Naive thymus-derived CD4-positive, alpha-beta T cell (primary cell): ENCODE measurements at regions of chr21 and their contacts with region 1.

Region 1: GRCh38 chr21:34073032-34073869 is at the starts of genes MRPS6 and SLC5A3:
- DNase-seq: peak; percentile 58 to 82 (median 72)
- ATAC-seq: peak; percentile 89
- H3K4me3 ChIP-seq: peak within 1 kb of the TSS; percentile 72
- H3K4me3 Mint-ChIP-seq: peak within 1 kb of the TSS; percentile 88 to 98 (median 96)
- H3K27ac ChIP-seq: peak within 1 kb of the TSS; percentile 82
- H3K27ac Mint-ChIP-seq: peak within 1 kb of the TSS; percentile 89 to 95 (median 93)
- H3K4me1 ChIP-seq: peaks cover 31 to 34% of the 10 kb centered on the region in 2 donors
- H3K4me1 Mint-ChIP-seq: peaks cover 9 to 54% (median 46%) of the 10 kb centered on the region in 7 donors
- H3K27me3 ChIP-seq: no peaks in the 10 kb centered on the region
- H3K27me3 Mint-ChIP-seq: peaks cover 0 to 7% (median 0%) of the 10 kb centered on the region in 5 donors
- total RNA-seq, gene MRPS6: 25.5 to 92.7 (median 87.9) TPM
- total RNA-seq, gene SLC5A3: 8.8 to 45.5 (median 34.0) TPM

Region 2: DNA sequence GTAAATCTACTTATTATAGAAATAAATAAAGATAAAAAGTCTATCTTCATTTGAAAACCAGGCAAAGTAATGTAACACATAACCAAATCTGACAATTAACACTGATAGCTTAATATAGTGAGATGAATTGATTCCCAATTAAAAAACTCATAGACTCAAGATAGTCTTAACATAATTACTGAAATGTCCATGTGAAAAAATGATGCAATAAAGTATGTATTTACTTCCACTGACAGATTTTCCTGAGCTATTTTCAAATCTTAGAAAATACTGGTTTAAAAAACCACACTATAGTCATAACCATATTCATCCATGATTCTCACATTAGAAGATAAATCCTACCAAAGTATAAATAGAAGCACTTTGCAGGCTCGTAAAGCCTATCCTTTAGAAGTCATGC is 475.2 kb before region 1 on chr21:
- CTCF ChIA-PET with region 1: no interaction called
- POLR2A ChIA-PET with region 1: no interaction called
- intact Hi-C with region 1: no loop called
- DNase-seq: no peak
- ATAC-seq: no peak
- H3K4me3 ChIP-seq: no peak overlapping the region
- H3K4me3 Mint-ChIP-seq: no peak overlapping the region
- H3K27ac ChIP-seq: no peak overlapping the region
- H3K27ac Mint-ChIP-seq: no peak overlapping the region
- H3K4me1 ChIP-seq: no peaks in the 10 kb centered on the region
- H3K4me1 Mint-ChIP-seq: no peaks in the 10 kb centered on the region
- H3K27me3 ChIP-seq: no peaks in the 10 kb centered on the region
- H3K27me3 Mint-ChIP-seq: no peaks in the 10 kb centered on the region

Region 3: DNA sequence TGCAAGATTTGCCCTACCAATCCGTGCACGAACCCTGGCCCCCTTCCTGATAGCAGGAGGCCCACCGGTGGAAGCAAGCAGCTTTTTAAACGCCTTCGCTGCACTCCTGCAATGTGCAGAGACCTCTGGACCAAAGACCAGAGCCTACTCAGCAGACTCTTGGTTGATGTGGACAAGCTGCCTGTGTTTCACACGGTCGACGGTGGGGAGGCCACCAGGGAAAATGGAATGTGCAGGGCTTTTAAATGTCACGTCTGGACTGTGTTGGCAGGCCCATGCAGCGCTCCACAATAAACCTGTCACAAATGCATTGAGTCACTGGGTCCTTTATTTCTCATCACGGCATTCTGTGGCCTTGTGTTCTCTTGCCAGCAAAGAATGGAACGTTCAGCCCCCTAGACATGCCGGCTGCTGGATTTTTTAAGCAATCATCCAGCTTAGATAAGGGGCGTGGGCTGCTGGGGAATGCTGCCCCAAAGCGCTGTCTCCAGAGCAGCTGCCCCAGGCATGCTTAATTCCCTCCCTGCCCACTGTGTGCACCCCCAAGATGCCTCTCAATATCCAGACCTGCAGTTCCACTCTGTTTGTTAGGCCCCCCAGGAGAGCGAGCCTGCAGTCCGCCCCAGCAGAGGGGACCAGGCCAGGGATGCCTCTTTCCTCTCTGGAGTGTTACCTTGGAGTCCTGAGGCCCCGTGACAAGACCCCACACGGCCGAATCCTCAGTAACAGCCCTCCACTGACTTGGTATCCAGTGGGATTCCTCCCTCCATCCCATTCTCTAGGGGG is 229.0 kb before region 1 on chr21:
- CTCF ChIA-PET with region 1: no interaction called
- POLR2A ChIA-PET with region 1: no interaction called
- intact Hi-C with region 1: no loop called
- DNase-seq: no peak
- ATAC-seq: no peak
- H3K4me3 ChIP-seq: no peak overlapping the region
- H3K4me3 Mint-ChIP-seq: no peak overlapping the region
- H3K27ac ChIP-seq: no peak overlapping the region
- H3K27ac Mint-ChIP-seq: no peak overlapping the region
- H3K4me1 ChIP-seq: no peaks in the 10 kb centered on the region
- H3K4me1 Mint-ChIP-seq: no peaks in the 10 kb centered on the region
- H3K27me3 ChIP-seq: no peaks in the 10 kb centered on the region
- H3K27me3 Mint-ChIP-seq: peaks cover 0 to 10% (median 0%) of the 10 kb centered on the region in 5 donors

Region 4: DNA sequence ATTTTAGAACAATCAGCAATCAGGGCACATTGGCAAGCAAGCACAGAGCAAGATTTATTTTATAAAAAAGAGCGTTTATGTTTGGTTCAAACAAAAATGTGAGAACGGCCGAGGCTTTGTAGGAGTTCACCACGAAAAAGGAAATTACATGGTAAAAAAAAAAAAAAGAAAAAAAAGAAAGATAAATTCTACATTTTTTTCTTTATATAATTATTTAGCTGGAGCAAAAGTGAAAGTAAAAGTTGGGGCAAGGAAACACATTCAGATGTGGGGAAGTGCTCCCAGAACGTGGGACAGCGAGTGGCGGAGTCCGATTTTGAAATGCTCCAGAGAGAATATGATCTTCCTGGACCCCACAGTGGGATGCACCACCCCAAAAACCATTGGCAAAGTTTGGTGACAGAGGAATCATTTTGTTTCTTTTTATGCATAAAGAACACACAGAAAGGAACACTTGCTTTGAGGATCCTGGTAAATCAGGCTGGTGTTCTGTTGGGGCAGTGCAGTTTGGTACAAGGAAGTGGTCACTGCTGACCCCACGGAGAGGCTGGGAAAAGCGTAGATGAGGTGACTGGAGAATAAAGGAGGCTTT is 141.4 kb before region 1 on chr21:
- CTCF ChIA-PET with region 1: no interaction called
- POLR2A ChIA-PET with region 1: interaction called, 48 read pairs
- intact Hi-C with region 1: no loop called
- DNase-seq: no peak
- ATAC-seq: peak; percentile 40
- H3K4me3 ChIP-seq: peak overlapping the region; percentile 77
- H3K4me3 Mint-ChIP-seq: peak overlapping the region; percentile 94 to 100 (median 98)
- H3K27ac ChIP-seq: peak overlapping the region; percentile 94
- H3K27ac Mint-ChIP-seq: peak overlapping the region; percentile 97 to 100 (median 99)
- H3K4me1 ChIP-seq: peaks cover 30 to 48% of the 10 kb centered on the region in 2 donors
- H3K4me1 Mint-ChIP-seq: peaks cover 18 to 59% (median 44%) of the 10 kb centered on the region in 7 donors
- H3K27me3 ChIP-seq: no peaks in the 10 kb centered on the region
- H3K27me3 Mint-ChIP-seq: no peaks in the 10 kb centered on the region

Region 5: GRCh38 chr21:34029743-34030528 is 43.3 kb before region 1 on chr21:
- CTCF ChIA-PET with region 1: no interaction called
- POLR2A ChIA-PET with region 1: interaction called, 4 read pairs
- intact Hi-C with region 1: loop called in 1 of 2 experiments (anchors 5 kb)
- DNase-seq: peak in 8 of 9 donors; percentile 5 to 42 (median 11)
- ATAC-seq: peak; percentile 91
- H3K4me3 ChIP-seq: no peak overlapping the region
- H3K4me3 Mint-ChIP-seq: peak overlapping the region in 8 of 10 donors; percentile 6 to 79 (median 63)
- H3K27ac ChIP-seq: no peak overlapping the region
- H3K27ac Mint-ChIP-seq: peak overlapping the region in 4 of 9 donors; percentile 17 to 93 (median 84)
- H3K4me1 ChIP-seq: no peaks in the 10 kb centered on the region
- H3K4me1 Mint-ChIP-seq: peaks cover 0 to 25% (median 4%) of the 10 kb centered on the region in 7 donors
- H3K27me3 ChIP-seq: no peaks in the 10 kb centered on the region
- H3K27me3 Mint-ChIP-seq: no peaks in the 10 kb centered on the region

Region 6: GRCh38 chr21:34129039-34129891 is 56.0 kb after region 1 on chr21:
- CTCF ChIA-PET with region 1: interaction called, 5 read pairs
- POLR2A ChIA-PET with region 1: interaction called, 5 read pairs
- intact Hi-C with region 1: loop called (anchors 1 kb)
- DNase-seq: peak; percentile 9 to 86 (median 78)
- ATAC-seq: peak; percentile 92
- H3K4me3 ChIP-seq: peak overlapping the region; percentile 22
- H3K4me3 Mint-ChIP-seq: peak overlapping the region; percentile 64 to 82 (median 76)
- H3K27ac ChIP-seq: peak overlapping the region; percentile 64
- H3K27ac Mint-ChIP-seq: peak overlapping the region; percentile 72 to 97 (median 90)
- H3K4me1 ChIP-seq: peaks cover 4 to 67% of the 10 kb centered on the region in 2 donors
- H3K4me1 Mint-ChIP-seq: peaks cover 69 to 99% (median 95%) of the 10 kb centered on the region in 7 donors
- H3K27me3 ChIP-seq: no peaks in the 10 kb centered on the region
- H3K27me3 Mint-ChIP-seq: no peaks in the 10 kb centered on the region

Region 7: DNA sequence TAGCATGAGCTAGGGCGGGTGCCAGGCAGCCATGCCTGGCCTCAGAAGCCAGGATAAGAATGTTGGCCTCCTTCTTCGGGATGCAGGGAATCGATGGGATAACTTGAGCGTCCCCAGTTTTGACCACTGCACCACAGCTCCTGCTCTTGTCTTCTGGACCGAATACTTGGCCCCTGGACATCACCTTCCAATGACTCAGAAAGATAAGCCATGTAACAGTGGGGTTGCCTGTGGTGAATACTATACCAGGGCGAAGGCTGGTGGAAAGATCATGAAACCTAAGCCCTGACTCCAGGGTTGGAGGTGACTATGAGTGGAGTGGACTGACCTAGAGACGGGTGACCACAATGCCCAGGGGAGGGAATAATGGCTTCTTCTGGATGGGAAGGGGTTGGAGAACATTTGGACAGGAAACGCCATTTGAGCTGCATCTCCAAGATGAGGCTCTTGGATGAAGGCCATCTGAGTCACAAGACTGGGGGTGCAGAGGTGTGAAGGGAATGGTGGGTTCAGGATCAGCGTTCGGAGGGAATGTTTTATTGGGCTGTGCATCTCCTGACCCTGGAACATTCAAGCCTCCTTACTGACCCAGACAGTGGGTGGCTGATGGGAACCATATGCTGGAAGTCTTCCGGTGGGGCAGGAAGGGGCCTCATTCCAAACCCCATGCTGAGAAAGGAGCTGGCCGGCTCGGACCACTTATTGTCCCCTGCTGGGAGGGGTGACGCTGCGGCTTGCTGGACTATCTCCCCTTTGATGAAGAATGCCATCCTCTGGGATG is 272.0 kb after region 1 on chr21:
- CTCF ChIA-PET with region 1: interaction called, 5 read pairs
- POLR2A ChIA-PET with region 1: no interaction called
- intact Hi-C with region 1: loop called (anchors 1 to 5 kb)
- DNase-seq: no peak
- ATAC-seq: no peak
- H3K4me3 ChIP-seq: no peak overlapping the region
- H3K4me3 Mint-ChIP-seq: no peak overlapping the region
- H3K27ac ChIP-seq: no peak overlapping the region
- H3K27ac Mint-ChIP-seq: peak overlapping the region in 1 of 9 donors; percentile 74
- H3K4me1 ChIP-seq: no peaks in the 10 kb centered on the region
- H3K4me1 Mint-ChIP-seq: peaks cover 0 to 15% (median 5%) of the 10 kb centered on the region in 7 donors
- H3K27me3 ChIP-seq: no peaks in the 10 kb centered on the region
- H3K27me3 Mint-ChIP-seq: peaks cover 0 to 8% (median 0%) of the 10 kb centered on the region in 5 donors